ENCODE measurements at regions of chr13 and their contacts with region 1.

Region 1: DNA sequence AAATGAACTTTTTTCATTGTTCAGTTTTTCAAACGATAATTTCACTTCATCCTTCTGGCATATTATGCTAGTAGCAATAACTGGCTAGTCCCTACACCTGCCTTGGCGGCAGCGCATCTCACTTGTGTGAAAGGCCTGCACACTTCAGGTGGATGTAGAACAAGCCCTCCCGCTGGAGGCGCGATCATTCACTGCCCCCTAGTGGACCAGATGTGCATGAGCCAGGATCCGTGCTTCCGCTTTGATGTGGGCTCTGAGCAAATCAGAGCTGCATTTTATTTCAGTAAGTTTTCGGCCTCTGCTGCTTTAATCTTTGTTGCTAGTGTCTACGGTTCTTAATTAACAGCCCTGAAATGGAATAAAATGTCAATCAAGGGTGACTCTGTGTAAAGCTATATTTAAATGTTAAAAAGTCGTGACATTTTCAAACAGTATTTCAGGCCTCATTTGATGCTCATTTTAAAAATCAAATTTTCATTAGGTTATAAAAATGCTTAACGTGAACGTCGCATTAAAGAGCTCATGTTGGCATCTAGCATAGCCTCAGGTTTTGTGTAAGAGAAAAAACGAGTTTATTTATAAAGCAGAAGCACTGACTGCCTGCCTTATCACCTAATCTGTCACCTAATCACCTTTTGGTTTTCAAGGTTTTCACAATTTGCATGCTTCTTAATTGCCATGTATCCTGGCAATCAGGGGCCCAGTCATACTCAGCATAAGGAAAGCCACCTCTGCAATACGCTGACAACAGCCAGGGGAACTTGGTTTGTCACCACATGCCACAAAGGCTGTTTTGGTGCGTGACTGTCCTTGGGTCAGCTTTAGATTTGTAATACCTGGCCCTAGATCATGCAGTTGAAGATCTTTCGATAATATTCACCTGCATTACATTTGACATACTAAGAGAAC is 112.2 kb downstream of the TEX26 start:
- DNase-seq: peak; percentile 59 to 73
- H3K4me3 ChIP-seq: peak overlapping the region; percentile 28; the same call in 1 of the 2 replicates
- H3K27ac ChIP-seq: peak overlapping the region; percentile 96
- H3K4me1 ChIP-seq: peaks cover 25% of the 10 kb centered on the region
- H3K27me3 ChIP-seq: no peaks in the 10 kb centered on the region
- CTCF ChIP-seq: peak; percentile 96

Region 2: DNA sequence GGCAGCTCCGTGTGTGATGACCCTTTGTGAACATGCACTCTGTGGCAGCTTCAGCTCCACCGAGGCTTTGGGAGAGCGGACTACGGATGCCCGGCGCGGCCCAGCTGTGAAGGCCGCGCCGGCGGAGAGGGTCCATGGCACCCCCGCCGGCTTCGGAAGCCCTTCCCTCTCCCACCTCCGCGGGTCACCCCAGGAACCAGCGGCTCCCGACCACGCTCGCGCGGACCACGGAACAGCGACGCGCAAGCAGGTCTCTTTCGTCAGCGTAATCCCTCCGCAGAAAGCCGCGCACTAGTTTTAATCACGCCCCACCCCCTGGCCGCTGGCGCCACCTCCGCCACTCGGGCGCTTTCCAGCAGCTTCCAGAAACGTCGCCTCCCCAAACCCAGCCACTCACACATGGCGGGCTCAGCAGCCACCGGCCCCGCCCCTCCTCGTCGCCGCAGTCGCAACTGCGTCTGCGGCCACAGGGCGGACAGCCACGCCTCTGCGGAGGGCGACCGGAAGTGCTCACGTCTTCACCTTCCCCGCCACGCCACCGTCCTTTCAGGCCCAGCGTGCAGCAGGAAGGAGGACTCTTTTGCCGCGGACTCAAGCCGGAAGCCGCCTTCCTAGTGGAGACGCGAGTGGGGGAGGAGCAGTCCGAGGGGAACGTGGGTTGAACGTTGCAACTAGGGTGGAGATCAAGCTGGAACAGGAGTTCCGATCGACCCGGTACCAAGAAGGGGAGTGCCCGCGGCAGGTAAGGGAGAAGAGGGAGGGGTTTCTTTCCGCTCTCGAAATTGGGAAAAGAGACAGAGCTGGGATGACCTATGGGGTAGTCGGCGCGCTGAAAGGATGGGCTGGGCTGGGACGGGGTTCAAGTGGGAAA is 427.1 kb before region 1 on chr13 and contains the start of gene USPL1:
- CTCF ChIA-PET with region 1: no interaction called
- POLR2A ChIA-PET with region 1: no interaction called
- intact Hi-C with region 1: loop called (anchors 5 kb)
- DNase-seq: peak; percentile 93 to 95
- H3K4me3 ChIP-seq: peak within 1 kb of the TSS; percentile 99
- H3K27ac ChIP-seq: peak within 1 kb of the TSS; percentile 98
- H3K4me1 ChIP-seq: peaks cover 33% of the 10 kb centered on the region
- H3K27me3 ChIP-seq: no peaks in the 10 kb centered on the region
- CTCF ChIP-seq: no peak
- total RNA-seq, gene USPL1: 8.9 and 10.7 TPM in 2 replicates

Region 3: GRCh38 chr13:30802953-30803478 is 241.6 kb before region 1 on chr13:
- CTCF ChIA-PET with region 1: no interaction called
- POLR2A ChIA-PET with region 1: no interaction called
- intact Hi-C with region 1: loop called (anchors 2 kb)
- DNase-seq: peak in 1 of 2 experiments; percentile 57
- H3K4me3 ChIP-seq: no peak overlapping the region
- H3K27ac ChIP-seq: no peak overlapping the region
- H3K4me1 ChIP-seq: no peaks in the 10 kb centered on the region
- H3K27me3 ChIP-seq: no peaks in the 10 kb centered on the region
- CTCF ChIP-seq: peak; percentile 95

Region 4: DNA sequence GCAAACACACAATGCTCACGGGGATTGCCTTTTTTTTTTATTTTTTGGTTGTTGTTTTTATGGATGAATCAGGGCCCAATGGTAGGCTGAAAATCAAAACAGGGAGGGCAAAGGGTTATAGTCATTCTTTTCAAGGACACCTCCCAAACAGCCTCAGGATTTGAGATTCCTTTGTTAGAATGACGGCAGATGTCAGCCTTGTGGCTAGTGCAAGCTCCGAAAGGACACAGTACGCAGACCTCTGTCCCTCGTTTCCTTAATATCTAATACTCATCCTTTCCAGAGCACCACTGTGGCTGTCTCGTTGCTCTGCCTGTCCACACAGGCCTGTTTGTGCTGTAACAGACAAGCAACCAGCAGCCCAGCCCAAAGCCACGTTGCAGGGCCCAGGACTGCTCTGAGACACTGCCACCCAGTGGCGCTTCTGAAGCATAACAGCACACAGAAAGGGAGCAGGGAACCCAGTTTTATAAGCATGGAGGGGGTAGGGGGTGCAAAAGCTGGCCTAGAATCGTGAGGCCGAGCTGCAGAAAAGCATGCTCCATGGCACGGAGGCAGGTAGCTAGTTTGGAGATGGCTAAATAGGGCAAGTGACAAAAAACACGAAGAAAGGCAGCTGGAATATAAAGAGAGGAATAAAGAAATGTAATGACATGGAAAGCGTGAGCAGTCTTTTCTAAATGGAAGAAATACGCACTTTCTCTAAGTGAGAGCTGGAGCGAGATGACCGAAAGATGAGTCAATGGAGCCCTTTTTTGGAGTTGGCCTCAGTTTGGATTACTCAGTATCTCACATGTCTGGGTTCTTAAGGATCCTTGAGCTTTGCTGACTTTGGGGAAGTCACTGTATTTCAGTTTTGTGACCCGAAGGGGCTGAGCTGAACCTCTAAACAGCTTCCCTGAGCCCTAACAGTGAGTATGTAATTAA is 179.2 kb before region 1 on chr13:
- CTCF ChIA-PET with region 1: interaction called, 3 read pairs
- POLR2A ChIA-PET with region 1: no interaction called
- intact Hi-C with region 1: loop called (anchors 2 kb)
- DNase-seq: peak; percentile 57 to 65
- H3K4me3 ChIP-seq: no peak overlapping the region
- H3K27ac ChIP-seq: 0 out of 2 replicates have a peak overlapping the region, but pooled peaks have one; percentile 5
- H3K4me1 ChIP-seq: 0 out of 2 replicates have a peak, but pooled peaks cover 9% of the 10 kb centered on the region
- H3K27me3 ChIP-seq: no peaks in the 10 kb centered on the region
- CTCF ChIP-seq: peak; percentile 96

Region 5: GRCh38 chr13:31161828-31162590 is 117.4 kb after region 1 on chr13 and contains the start of gene HSPH1:
- CTCF ChIA-PET with region 1: no interaction called
- POLR2A ChIA-PET with region 1: no interaction called
- intact Hi-C with region 1: loop called (anchors 5 kb)
- DNase-seq: peak; percentile 94 to 96
- H3K4me3 ChIP-seq: peak within 1 kb of the TSS; percentile 67
- H3K27ac ChIP-seq: peak within 1 kb of the TSS; percentile 58
- H3K4me1 ChIP-seq: peaks cover 40% of the 10 kb centered on the region
- H3K27me3 ChIP-seq: no peaks in the 10 kb centered on the region
- CTCF ChIP-seq: no peak
- total RNA-seq, gene HSPH1: 61.8 and 105 TPM in 2 replicates

Measured in PC-9 (cell line).